MCF 10A (cell line): ENCODE measurements at regions of chr1 and their contacts with region 1.

Region 1: GRCh38 chr1:165768513-165769394 is at the start of gene TMCO1:
- DNase-seq: peak; percentile 100
- H3K4me3 Mint-ChIP-seq: peak within 1 kb of the TSS; percentile 95
- H3K27ac Mint-ChIP-seq: peak within 1 kb of the TSS; percentile 98
- H3K4me1 Mint-ChIP-seq: peaks cover 46% of the 10 kb centered on the region
- H3K27me3 Mint-ChIP-seq: no peaks in the 10 kb centered on the region
- CTCF ChIP-seq: no peak
- total RNA-seq, gene TMCO1: 158 and 202 TPM in 2 replicates

Region 2: GRCh38 chr1:164937291-164937690 is 831.5 kb before region 1 on chr1:
- CTCF ChIA-PET with region 1: no interaction called
- POLR2A ChIA-PET with region 1: no interaction called
- intact Hi-C with region 1: no loop called
- DNase-seq: no peak
- H3K4me3 Mint-ChIP-seq: no peak overlapping the region
- H3K27ac Mint-ChIP-seq: no peak overlapping the region
- H3K4me1 Mint-ChIP-seq: no peaks in the 10 kb centered on the region
- H3K27me3 Mint-ChIP-seq: peaks cover 14% of the 10 kb centered on the region
- CTCF ChIP-seq: no peak

Region 3: DNA sequence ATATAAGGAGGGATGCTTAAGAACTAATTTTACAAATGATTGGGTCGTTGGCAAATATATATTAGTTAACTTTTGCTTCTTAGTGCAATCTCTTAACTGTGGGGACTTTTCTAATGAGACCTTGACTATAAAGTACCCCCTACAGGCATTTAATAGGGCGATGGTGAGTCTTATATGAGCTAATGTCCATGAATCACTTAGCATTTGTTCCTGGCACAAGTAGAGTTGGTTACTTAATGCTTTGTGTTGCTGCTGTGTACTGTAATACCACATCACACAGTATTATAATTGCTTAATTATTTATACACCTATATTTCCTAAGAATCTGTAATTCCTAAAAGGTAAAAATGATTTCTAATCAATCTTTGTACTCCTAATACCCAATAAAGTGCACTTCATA is 25.2 kb after region 1 on chr1:
- CTCF ChIA-PET with region 1: interaction called, 4 read pairs
- POLR2A ChIA-PET with region 1: interaction called, 12 read pairs
- intact Hi-C with region 1: no loop called
- DNase-seq: peak; percentile 49
- H3K4me3 Mint-ChIP-seq: no peak overlapping the region
- H3K27ac Mint-ChIP-seq: no peak overlapping the region
- H3K4me1 Mint-ChIP-seq: no peaks in the 10 kb centered on the region
- H3K27me3 Mint-ChIP-seq: no peaks in the 10 kb centered on the region
- CTCF ChIP-seq: no peak

Region 4: GRCh38 chr1:165898837-165899236 is 130.1 kb after region 1 on chr1:
- CTCF ChIA-PET with region 1: interaction called, 7 read pairs
- POLR2A ChIA-PET with region 1: interaction called, 40 read pairs
- intact Hi-C with region 1: loop called (anchors 2 kb)
- DNase-seq: peak; percentile 73
- H3K4me3 Mint-ChIP-seq: peak overlapping the region; percentile 56
- H3K27ac Mint-ChIP-seq: peak overlapping the region; percentile 60
- H3K4me1 Mint-ChIP-seq: peaks cover 65% of the 10 kb centered on the region
- H3K27me3 Mint-ChIP-seq: no peaks in the 10 kb centered on the region
- CTCF ChIP-seq: no peak

Region 5: DNA sequence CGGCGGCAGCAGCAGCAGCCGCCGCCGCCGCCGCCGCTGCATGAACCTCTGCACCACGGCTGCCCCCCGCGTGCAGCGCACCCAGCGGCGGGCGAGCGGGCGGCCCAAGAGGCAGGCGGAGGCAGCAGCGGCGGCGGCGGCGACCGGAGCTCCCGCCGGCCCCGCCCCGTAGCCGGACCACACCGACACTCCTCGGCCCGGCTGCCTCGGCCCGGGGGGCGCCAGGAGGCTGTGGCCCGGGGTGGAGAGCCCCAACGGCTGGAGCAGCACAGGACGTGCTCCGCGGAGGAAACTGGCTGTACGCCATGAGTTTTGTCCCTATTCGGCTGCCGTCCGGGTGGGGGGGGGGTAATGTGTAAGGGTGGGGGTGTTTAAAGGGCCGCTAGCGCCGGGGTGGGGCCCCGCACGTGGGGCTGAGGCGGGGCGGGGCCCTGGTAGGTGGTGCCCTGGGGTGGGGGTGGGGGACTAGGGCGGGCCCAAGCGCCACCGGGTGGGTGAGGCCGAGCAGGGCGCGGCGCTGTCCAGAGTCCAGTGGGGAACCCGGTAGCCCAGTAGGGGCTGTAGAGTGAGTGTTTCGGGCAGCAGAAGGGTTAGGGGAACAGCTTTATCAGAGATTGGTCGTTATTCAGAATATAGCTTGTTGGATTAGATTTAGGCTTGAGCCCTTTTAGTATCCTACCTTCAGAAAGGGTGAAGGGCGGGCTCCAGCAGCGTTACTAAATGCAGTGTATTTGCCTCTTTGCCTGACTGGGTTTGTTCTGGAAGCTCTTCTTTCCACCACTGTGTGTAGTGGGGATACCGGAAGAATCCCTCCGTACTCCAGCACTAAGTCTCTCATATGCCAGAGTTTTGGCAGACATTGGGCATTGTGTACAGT is 398.2 kb after region 1 on chr1 and contains the start of gene FAM78B:
- CTCF ChIA-PET with region 1: no interaction called
- POLR2A ChIA-PET with region 1: no interaction called
- intact Hi-C with region 1: loop called (anchors 2 kb)
- DNase-seq: peak; percentile 85
- H3K4me3 Mint-ChIP-seq: peak within 1 kb of the TSS; percentile 72
- H3K27ac Mint-ChIP-seq: no peak within 1 kb of the TSS
- H3K4me1 Mint-ChIP-seq: peaks cover 17% of the 10 kb centered on the region
- H3K27me3 Mint-ChIP-seq: peaks cover 26% of the 10 kb centered on the region
- CTCF ChIP-seq: no peak
- total RNA-seq, gene FAM78B: 1.1 and 1.5 TPM in 2 replicates